Activated T-helper 1 cell treated with anti-CD3 and anti-CD28 coated beads, Interleukin-12 subunit alpha, Interleukin-12 subunit beta, Interleukin-2, Interleukin-4 antibody, amounts not matched to agents 30 ng/mL and 10 ng/mL and 1 ng/mL, durations not matched to agents 14 hours and 24 hours and 36 hours (primary cell): ENCODE measurements at regions of chr6 and their contacts with region 1.

Region 1: GRCh38 chr6:106097411-106098231 is 11.5 kb downstream of the PRDM1 start:
- DNase-seq: peak; percentile 72
- H3K4me3 Mint-ChIP-seq: peak overlapping the region; percentile 89
- H3K27ac Mint-ChIP-seq: peak overlapping the region; percentile 96
- H3K4me1 Mint-ChIP-seq: peaks cover 91% of the 10 kb centered on the region
- H3K27me3 Mint-ChIP-seq: no peaks in the 10 kb centered on the region

Region 2: DNA sequence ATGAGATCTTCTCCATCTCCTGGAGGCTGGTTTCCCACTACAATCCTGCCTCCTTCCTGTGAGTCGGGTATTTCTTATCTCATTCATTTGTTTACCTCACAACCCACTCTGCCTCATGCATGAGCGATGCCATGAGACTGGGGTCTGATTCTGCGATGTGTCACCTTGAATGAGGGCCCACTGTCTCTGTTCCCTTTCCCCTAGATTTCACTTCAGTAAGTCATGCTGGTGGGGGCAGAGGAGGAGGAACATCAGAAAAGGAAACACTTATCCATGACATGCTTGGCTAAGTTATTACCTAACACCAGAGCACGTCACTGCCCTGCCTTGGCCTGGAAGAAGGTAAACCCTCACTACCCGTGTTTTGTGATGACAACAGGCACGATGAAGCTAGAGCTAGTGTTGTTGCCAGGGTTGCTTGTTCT is 348.9 kb before region 1 on chr6:
- intact Hi-C with region 1: loop called (anchors 5 kb)
- DNase-seq: no peak
- H3K4me3 Mint-ChIP-seq: no peak overlapping the region
- H3K27ac Mint-ChIP-seq: no peak overlapping the region
- H3K4me1 Mint-ChIP-seq: peaks cover 57% of the 10 kb centered on the region
- H3K27me3 Mint-ChIP-seq: no peaks in the 10 kb centered on the region

Region 3: GRCh38 chr6:105981002-105981887 is 116.4 kb before region 1 on chr6:
- intact Hi-C with region 1: loop called (anchors 1 kb)
- DNase-seq: peak; percentile 48
- H3K4me3 Mint-ChIP-seq: peak overlapping the region; percentile 84
- H3K27ac Mint-ChIP-seq: peak overlapping the region; percentile 91
- H3K4me1 Mint-ChIP-seq: peaks cover 79% of the 10 kb centered on the region
- H3K27me3 Mint-ChIP-seq: no peaks in the 10 kb centered on the region

Region 4: GRCh38 chr6:106014930-106015329 is 82.7 kb before region 1 on chr6:
- intact Hi-C with region 1: no loop called
- DNase-seq: no peak
- H3K4me3 Mint-ChIP-seq: no peak overlapping the region
- H3K27ac Mint-ChIP-seq: no peak overlapping the region
- H3K4me1 Mint-ChIP-seq: no peaks in the 10 kb centered on the region
- H3K27me3 Mint-ChIP-seq: peaks cover 22% of the 10 kb centered on the region

Region 5: GRCh38 chr6:106125925-106126435 is 28.4 kb after region 1 on chr6:
- intact Hi-C with region 1: loop called (anchors 1 kb)
- DNase-seq: peak; percentile 34
- H3K4me3 Mint-ChIP-seq: peak overlapping the region; percentile 52
- H3K27ac Mint-ChIP-seq: peak overlapping the region; percentile 83
- H3K4me1 Mint-ChIP-seq: peaks cover 53% of the 10 kb centered on the region
- H3K27me3 Mint-ChIP-seq: peaks cover 5% of the 10 kb centered on the region

Region 6: DNA sequence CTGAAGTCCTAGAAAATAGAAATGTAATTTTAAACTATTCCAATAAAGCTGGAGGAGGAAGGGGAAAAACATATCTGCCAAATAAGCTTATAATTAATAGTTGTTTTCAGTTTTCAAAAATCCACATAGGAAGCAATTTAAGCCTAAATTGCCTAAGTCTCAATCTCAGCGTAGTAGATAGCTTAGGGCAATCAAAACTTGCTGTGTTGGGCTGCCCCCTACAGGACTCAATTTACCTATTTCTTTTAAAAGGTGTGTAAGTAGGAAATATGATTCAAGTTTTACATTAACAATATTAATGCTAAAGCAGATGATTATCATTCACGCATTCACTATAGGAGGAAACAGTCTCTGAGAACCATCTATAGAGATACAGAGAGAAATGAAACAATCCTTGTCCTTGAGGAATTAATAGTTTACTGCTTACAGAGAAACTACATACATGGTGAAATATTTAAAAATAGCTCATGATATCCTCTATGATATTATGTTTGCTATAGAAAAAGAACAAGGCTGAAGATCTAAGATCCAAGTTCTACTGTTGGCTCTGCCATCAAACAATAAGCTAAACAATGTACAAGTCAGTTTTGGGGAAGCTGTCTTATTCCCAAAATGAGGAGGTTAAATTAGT is 125.8 kb after region 1 on chr6:
- intact Hi-C with region 1: loop called (anchors 1 kb)
- DNase-seq: peak; percentile 54
- H3K4me3 Mint-ChIP-seq: no peak overlapping the region
- H3K27ac Mint-ChIP-seq: no peak overlapping the region
- H3K4me1 Mint-ChIP-seq: peaks cover 59% of the 10 kb centered on the region
- H3K27me3 Mint-ChIP-seq: no peaks in the 10 kb centered on the region

Region 7: GRCh38 chr6:106608062-106608668 is 510.5 kb after region 1 on chr6:
- intact Hi-C with region 1: no loop called
- DNase-seq: no peak
- H3K4me3 Mint-ChIP-seq: no peak overlapping the region
- H3K27ac Mint-ChIP-seq: no peak overlapping the region
- H3K4me1 Mint-ChIP-seq: peaks cover 9% of the 10 kb centered on the region
- H3K27me3 Mint-ChIP-seq: no peaks in the 10 kb centered on the region

Region 8: DNA sequence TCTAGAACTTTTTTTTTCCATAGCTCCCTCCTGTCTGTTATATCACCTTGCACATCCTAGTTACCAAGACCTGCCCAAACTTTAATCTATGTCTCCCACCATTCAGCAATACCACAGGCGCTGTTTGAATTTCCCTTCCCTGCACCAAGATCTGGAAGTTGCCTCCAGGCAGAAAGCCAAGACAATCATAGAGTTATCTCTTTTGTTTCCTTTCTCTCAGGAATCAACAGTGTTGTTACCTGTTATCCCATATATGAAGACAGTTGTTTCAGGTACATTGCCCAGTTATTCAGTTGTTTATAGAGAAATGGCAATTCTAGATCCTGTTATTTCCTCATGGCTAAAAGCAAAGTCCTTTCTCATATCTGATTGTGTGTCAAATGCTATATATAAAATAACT is 1298.6 kb after region 1 on chr6:
- intact Hi-C with region 1: no loop called
- DNase-seq: no peak
- H3K4me3 Mint-ChIP-seq: no peak overlapping the region
- H3K27ac Mint-ChIP-seq: no peak overlapping the region
- H3K4me1 Mint-ChIP-seq: no peaks in the 10 kb centered on the region
- H3K27me3 Mint-ChIP-seq: peaks cover 2% of the 10 kb centered on the region

Region 9: DNA sequence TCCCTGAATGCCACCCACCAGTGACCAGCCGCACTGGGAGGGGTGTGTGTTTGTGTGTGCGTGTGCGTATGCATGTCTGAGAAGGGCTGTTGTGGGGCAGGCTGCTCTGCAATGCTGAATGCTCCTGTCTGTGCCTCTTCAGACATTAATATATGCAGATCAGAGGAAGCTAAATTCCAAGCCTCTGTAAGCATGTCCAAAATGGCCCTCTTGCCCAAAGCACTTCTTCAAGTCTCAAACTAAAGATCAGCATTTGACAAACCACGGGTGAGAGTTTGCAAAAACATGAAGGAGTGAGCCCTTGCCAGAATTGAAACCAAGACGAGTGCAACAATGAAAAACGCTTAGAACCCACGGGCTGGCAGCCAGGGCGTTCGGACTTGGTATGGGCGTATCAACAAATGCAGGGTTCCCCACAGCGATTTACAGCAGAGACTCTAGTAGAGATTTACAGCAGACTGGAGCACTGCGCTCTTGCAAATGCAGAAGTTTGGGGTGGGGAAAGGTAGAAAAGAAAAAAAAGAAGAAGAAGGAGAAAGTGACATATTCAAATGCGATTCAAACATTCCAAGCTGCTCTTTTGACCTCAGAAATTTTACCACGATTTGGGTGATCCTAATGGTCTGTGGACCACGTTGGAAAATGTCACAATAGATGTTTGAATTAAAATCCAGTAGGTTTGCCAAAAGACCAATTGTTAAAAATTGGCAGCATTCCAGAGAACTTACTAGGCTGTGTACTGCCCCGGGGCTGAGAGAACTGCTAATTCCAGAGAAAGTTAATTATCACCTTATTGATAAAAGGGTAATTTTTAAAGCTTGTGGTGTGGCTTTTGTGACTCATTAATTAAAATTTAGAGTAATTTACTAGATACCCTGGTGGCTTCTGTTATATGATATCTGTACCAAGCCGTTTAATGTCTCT is 1723.0 kb after region 1 on chr6:
- intact Hi-C with region 1: loop called (anchors 5 kb)
- DNase-seq: peak; percentile 27
- H3K4me3 Mint-ChIP-seq: peak overlapping the region; percentile 83
- H3K27ac Mint-ChIP-seq: peak overlapping the region; percentile 97
- H3K4me1 Mint-ChIP-seq: peaks cover 88% of the 10 kb centered on the region
- H3K27me3 Mint-ChIP-seq: no peaks in the 10 kb centered on the region